ENCODE measurements at regions of chr14 and their contacts with region 1.

Region 1: DNA sequence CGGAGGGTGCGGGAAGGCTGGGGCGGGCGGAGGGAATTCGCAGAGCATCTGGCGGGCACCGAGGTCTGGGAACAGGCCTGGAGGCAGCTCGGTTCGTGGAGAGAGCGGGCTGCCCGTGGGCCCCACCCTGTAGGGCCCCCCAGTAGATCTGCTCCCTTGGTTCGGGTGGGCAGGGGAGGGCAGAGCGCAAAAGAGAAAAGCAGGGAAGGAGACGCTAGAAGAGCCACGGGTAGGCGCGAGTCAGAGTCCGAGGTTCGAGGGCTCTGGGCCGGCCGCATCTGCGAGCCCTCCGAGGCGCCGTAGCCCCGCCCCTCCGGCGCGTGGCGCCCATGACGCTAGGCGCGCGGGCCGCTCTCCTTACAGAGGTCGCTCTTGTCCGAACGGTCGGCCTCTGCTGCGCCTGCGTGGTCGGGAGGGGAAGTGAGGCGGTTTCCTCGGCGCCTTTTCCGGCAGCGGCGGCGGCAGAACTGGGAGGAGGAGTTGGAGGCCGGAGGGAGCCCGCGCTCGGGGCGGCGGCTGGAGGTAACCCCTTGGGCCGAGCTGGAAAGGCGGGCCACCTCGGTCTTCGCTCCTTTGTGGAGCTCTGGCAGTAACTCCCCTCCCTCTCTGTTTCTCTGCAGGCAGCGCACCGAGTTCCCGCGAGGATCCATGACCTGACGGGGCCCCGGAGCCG is at the start of gene ARF6:
- DNase-seq: peak; percentile 97 to 98
- H3K4me3 ChIP-seq: peak within 1 kb of the TSS; percentile 89 to 95
- H3K27ac ChIP-seq: peak within 1 kb of the TSS; percentile 100
- H3K4me1 ChIP-seq: peaks cover 49% of the 10 kb centered on the region
- H3K27me3 ChIP-seq: no peaks in the 10 kb centered on the region
- CTCF ChIP-seq: no peak
- POLR2A ChIP-seq: peak; percentile 60 to 93
- total RNA-seq, gene ARF6: 48.6 TPM

Region 2: GRCh38 chr14:49959822-49960408 is 67.1 kb after region 1 on chr14:
- intact Hi-C with region 1: no loop called
- DNase-seq: no peak
- H3K4me3 ChIP-seq: no peak overlapping the region
- H3K27ac ChIP-seq: no peak overlapping the region
- H3K4me1 ChIP-seq: peaks cover 12% of the 10 kb centered on the region
- H3K27me3 ChIP-seq: no peaks in the 10 kb centered on the region
- CTCF ChIP-seq: no peak
- POLR2A ChIP-seq: no peak

Region 3: GRCh38 chr14:50003213-50004031 is 110.7 kb after region 1 on chr14:
- intact Hi-C with region 1: loop called (anchors 5 kb)
- DNase-seq: no peak
- H3K4me3 ChIP-seq: peak overlapping the region; percentile 44 to 66
- H3K27ac ChIP-seq: peak overlapping the region; percentile 92
- H3K4me1 ChIP-seq: peaks cover 57% of the 10 kb centered on the region
- H3K27me3 ChIP-seq: no peaks in the 10 kb centered on the region
- CTCF ChIP-seq: peak in 1 of 3 experiments; percentile 20
- POLR2A ChIP-seq: peak in 1 of 2 donors; percentile 31

Region 4: DNA sequence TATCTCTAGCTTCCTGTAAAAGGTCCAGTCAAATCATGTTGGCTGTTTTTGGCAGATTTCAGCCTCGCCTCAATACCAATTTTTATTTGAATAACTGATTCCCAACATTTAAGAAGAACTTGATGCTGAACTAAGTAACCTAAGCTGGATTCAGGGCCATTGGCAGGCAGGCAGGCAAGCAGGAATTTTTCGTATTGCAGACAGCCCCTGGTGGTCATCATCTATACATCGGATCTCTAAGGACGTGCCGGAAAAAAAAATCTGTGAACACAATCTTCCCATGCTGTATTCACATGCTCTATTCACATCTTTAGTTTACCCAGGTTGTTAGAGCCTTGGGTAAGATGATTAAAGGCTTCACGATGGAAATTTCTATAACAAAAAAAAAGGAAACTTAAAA is 216.6 kb after region 1 on chr14:
- intact Hi-C with region 1: loop called (anchors 10 kb)
- DNase-seq: no peak
- H3K4me3 ChIP-seq: no peak overlapping the region
- H3K27ac ChIP-seq: no peak overlapping the region
- H3K4me1 ChIP-seq: peaks cover 2% of the 10 kb centered on the region
- H3K27me3 ChIP-seq: no peaks in the 10 kb centered on the region
- CTCF ChIP-seq: no peak
- POLR2A ChIP-seq: no peak